ENCODE measurements at regions of chr1 and their contacts with region 1.

Region 1: GRCh38 chr1:157138220-157139051 is at the start of gene ETV3:
- DNase-seq: peak; percentile 65 to 90 (median 87)
- ATAC-seq: peak; percentile 87
- H3K4me3 ChIP-seq: peak within 1 kb of the TSS; percentile 84
- H3K4me3 Mint-ChIP-seq: peak within 1 kb of the TSS; percentile 90 to 97 (median 95)
- H3K27ac ChIP-seq: peak within 1 kb of the TSS; percentile 96
- H3K27ac Mint-ChIP-seq: peak within 1 kb of the TSS; percentile 83 to 98 (median 95)
- H3K4me1 ChIP-seq: peaks cover 43 to 48% of the 10 kb centered on the region in 2 donors
- H3K4me1 Mint-ChIP-seq: peaks cover 41 to 65% (median 57%) of the 10 kb centered on the region in 7 donors
- H3K27me3 ChIP-seq: no peaks in the 10 kb centered on the region
- H3K27me3 Mint-ChIP-seq: no peaks in the 10 kb centered on the region
- total RNA-seq, gene ETV3: 31.5 to 72.4 (median 53.3) TPM

Region 2: DNA sequence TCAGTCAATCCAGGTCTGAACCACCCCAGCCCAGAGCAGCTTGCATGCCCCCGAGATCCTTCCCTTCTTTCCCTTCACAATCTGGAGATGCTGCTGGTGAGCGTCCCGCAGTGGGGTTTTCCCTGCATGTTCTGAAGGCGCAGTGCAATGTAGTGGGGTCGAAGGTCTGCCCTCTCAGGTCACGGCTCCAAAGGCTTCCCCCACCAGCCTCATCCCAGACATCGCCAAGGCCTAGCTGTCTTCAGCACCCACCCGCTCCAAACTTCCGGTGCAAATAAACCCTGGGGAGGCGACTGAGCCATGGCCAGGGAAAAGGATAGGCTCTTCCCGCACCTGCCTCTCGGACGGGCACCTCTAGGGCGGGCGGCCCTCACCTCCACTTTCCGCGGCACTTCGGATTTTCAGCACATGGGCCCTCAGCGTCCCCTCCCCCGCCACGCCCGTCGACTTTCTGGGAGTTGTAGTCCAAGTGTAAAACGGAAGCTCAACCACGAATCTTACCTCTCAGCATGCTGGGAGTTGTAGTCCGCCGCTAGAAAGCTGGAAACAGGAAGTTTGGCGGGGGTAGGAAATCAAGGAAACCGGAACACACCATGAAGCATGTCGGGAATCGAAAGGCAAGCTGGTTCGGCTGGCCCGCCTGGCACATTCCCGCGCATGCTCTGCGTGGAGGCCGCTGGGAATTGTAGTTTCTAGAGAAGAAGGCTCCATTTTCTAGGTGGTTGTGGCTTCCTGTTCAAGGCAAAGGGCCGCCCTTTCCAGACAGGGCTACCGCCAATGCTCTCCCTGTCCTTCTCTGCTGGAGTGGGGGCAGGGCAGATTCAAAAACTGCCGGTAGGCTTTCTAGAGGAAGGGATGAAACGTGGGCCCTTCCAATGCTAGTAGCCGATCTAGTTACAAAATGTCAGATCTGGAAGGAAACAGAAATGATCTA is 397.5 kb before region 1 on chr1 and contains the start of gene MRPL24:
- CTCF ChIA-PET with region 1: no interaction called
- POLR2A ChIA-PET with region 1: no interaction called
- intact Hi-C with region 1: loop called in 1 of 2 experiments (anchors 10 kb)
- DNase-seq: peak; percentile 84 to 99 (median 98)
- ATAC-seq: peak; percentile 95
- H3K4me3 ChIP-seq: peak within 1 kb of the TSS; percentile 79
- H3K4me3 Mint-ChIP-seq: peak within 1 kb of the TSS; percentile 94 to 99 (median 98)
- H3K27ac ChIP-seq: peak within 1 kb of the TSS; percentile 90
- H3K27ac Mint-ChIP-seq: peak within 1 kb of the TSS; percentile 86 to 99 (median 98)
- H3K4me1 ChIP-seq: peaks cover 17 to 20% of the 10 kb centered on the region in 2 donors
- H3K4me1 Mint-ChIP-seq: peaks cover 23 to 50% (median 40%) of the 10 kb centered on the region in 7 donors
- H3K27me3 ChIP-seq: no peaks in the 10 kb centered on the region
- H3K27me3 Mint-ChIP-seq: no peaks in the 10 kb centered on the region
- total RNA-seq, gene MRPL24: 19.1 to 68.9 (median 47.2) TPM

Region 3: GRCh38 chr1:156961709-156962108 is 176.7 kb before region 1 on chr1:
- CTCF ChIA-PET with region 1: no interaction called
- POLR2A ChIA-PET with region 1: interaction called, 3 read pairs
- intact Hi-C with region 1: loop called in 1 of 2 experiments (anchors 10 kb)
- DNase-seq: peak in 7 of 9 donors; percentile 34 to 63 (median 49)
- ATAC-seq: peak; percentile 76
- H3K4me3 ChIP-seq: peak overlapping the region; percentile 5
- H3K4me3 Mint-ChIP-seq: peak overlapping the region; percentile 63 to 94 (median 76)
- H3K27ac ChIP-seq: no peak overlapping the region
- H3K27ac Mint-ChIP-seq: peak overlapping the region in 8 of 9 donors; percentile 5 to 77 (median 58)
- H3K4me1 ChIP-seq: peaks cover 13 to 29% of the 10 kb centered on the region in 2 donors
- H3K4me1 Mint-ChIP-seq: peaks cover 34 to 77% (median 59%) of the 10 kb centered on the region in 7 donors
- H3K27me3 ChIP-seq: no peaks in the 10 kb centered on the region
- H3K27me3 Mint-ChIP-seq: peaks cover 0 to 16% (median 0%) of the 10 kb centered on the region in 5 donors

Region 4: DNA sequence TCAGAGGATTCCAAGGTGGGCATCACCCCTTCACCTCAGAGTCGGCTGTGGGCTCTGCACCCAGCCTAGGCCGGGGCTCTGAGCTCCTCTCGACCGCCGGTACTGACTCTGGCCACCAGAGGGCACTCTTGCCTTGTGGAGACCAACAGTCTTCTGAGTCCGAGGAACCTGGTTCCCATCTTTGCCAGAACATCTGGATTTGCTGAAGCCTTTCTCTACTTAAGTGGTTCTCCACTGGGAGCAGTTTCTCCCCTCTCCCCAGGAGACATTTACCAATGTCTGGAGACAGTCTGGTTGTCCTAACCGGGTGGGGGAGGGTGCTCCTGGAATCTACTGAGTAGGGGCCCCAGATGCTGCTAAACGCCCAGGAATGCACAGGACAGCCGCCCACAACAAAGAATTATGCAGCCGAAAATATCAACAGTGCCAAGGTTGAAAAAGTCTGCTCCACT is 48.2 kb before region 1 on chr1:
- CTCF ChIA-PET with region 1: interaction called, 7 read pairs
- POLR2A ChIA-PET with region 1: interaction called, 4 read pairs
- intact Hi-C with region 1: loop called in 1 of 2 experiments (anchors 5 kb)
- DNase-seq: peak; percentile 64 to 88 (median 81)
- ATAC-seq: peak; percentile 91
- H3K4me3 ChIP-seq: no peak overlapping the region
- H3K4me3 Mint-ChIP-seq: no peak overlapping the region
- H3K27ac ChIP-seq: no peak overlapping the region
- H3K27ac Mint-ChIP-seq: no peak overlapping the region
- H3K4me1 ChIP-seq: peaks cover 0 to 4% of the 10 kb centered on the region in 2 donors
- H3K4me1 Mint-ChIP-seq: peaks cover 0 to 8% (median 0%) of the 10 kb centered on the region in 7 donors
- H3K27me3 ChIP-seq: no peaks in the 10 kb centered on the region
- H3K27me3 Mint-ChIP-seq: peaks cover 0 to 11% (median 0%) of the 10 kb centered on the region in 5 donors

Region 5: GRCh38 chr1:157156058-157156541 is 17.7 kb after region 1 on chr1:
- CTCF ChIA-PET with region 1: interaction called, 37 read pairs
- POLR2A ChIA-PET with region 1: interaction called, 5 read pairs
- intact Hi-C with region 1: loop called (anchors 1 to 2 kb)
- DNase-seq: peak; percentile 52 to 81 (median 67)
- ATAC-seq: peak; percentile 84
- H3K4me3 ChIP-seq: no peak overlapping the region
- H3K4me3 Mint-ChIP-seq: peak overlapping the region in 8 of 10 donors; percentile 52 to 73 (median 65)
- H3K27ac ChIP-seq: no peak overlapping the region
- H3K27ac Mint-ChIP-seq: peak overlapping the region in 2 of 9 donors; percentile 26 to 51
- H3K4me1 ChIP-seq: peaks cover 8 to 28% of the 10 kb centered on the region in 2 donors
- H3K4me1 Mint-ChIP-seq: peaks cover 15 to 36% (median 26%) of the 10 kb centered on the region in 7 donors
- H3K27me3 ChIP-seq: no peaks in the 10 kb centered on the region
- H3K27me3 Mint-ChIP-seq: peaks cover 6 to 22% (median 9%) of the 10 kb centered on the region in 5 donors

Region 6: GRCh38 chr1:157288996-157289395 is 150.6 kb after region 1 on chr1:
- CTCF ChIA-PET with region 1: no interaction called
- POLR2A ChIA-PET with region 1: no interaction called
- intact Hi-C with region 1: no loop called
- DNase-seq: no peak
- ATAC-seq: peak; percentile 42
- H3K4me3 ChIP-seq: no peak overlapping the region
- H3K4me3 Mint-ChIP-seq: no peak overlapping the region
- H3K27ac ChIP-seq: no peak overlapping the region
- H3K27ac Mint-ChIP-seq: no peak overlapping the region
- H3K4me1 ChIP-seq: no peaks in the 10 kb centered on the region
- H3K4me1 Mint-ChIP-seq: peaks cover 0 to 2% (median 0%) of the 10 kb centered on the region in 7 donors
- H3K27me3 ChIP-seq: no peaks in the 10 kb centered on the region
- H3K27me3 Mint-ChIP-seq: peaks cover 7 to 67% (median 40%) of the 10 kb centered on the region in 5 donors

Measured in naive thymus-derived CD4-positive, alpha-beta T cell (primary cell).